ENCODE measurements at regions of chr12 and their contacts with region 1.

Region 1: GRCh38 chr12:100154474-100155247 is 12.0 kb upstream of the BLTP3B start:
- DNase-seq: peak; percentile 48 to 78 (median 58)
- H3K4me3 ChIP-seq: no peak overlapping the region
- H3K4me3 Mint-ChIP-seq: no peak overlapping the region
- H3K27ac ChIP-seq: no peak overlapping the region
- H3K27ac Mint-ChIP-seq: peak overlapping the region in 1 of 8 donors; percentile 72
- H3K4me1 ChIP-seq: peaks cover 4% of the 10 kb centered on the region
- H3K4me1 Mint-ChIP-seq: peaks cover 4 to 6% (median 6%) of the 10 kb centered on the region in 3 donors
- H3K27me3 ChIP-seq: no peaks in the 10 kb centered on the region
- H3K27me3 Mint-ChIP-seq: no peaks in the 10 kb centered on the region

Region 2: GRCh38 chr12:100128512-100128908 is 26.2 kb before region 1 on chr12:
- CTCF ChIA-PET with region 1: no interaction called
- POLR2A ChIA-PET with region 1: no interaction called
- DNase-seq: no peak
- H3K4me3 ChIP-seq: no peak overlapping the region
- H3K4me3 Mint-ChIP-seq: peak overlapping the region in 1 of 7 donors; percentile 19
- H3K27ac ChIP-seq: no peak overlapping the region
- H3K27ac Mint-ChIP-seq: peak overlapping the region in 6 of 8 donors; percentile 20 to 70 (median 42)
- H3K4me1 ChIP-seq: peaks cover 17% of the 10 kb centered on the region
- H3K4me1 Mint-ChIP-seq: peaks cover 32 to 51% (median 44%) of the 10 kb centered on the region in 3 donors
- H3K27me3 ChIP-seq: no peaks in the 10 kb centered on the region
- H3K27me3 Mint-ChIP-seq: no peaks in the 10 kb centered on the region

Region 3: GRCh38 chr12:100142851-100143559 is 11.7 kb before region 1 on chr12 and contains the start of gene BLTP3B:
- CTCF ChIA-PET with region 1: interaction called, 22 read pairs
- POLR2A ChIA-PET with region 1: interaction called, 4 read pairs
- DNase-seq: peak; percentile 81 to 93 (median 85)
- H3K4me3 ChIP-seq: peak within 1 kb of the TSS; percentile 89
- H3K4me3 Mint-ChIP-seq: peak within 1 kb of the TSS; percentile 87 to 97 (median 95)
- H3K27ac ChIP-seq: peak within 1 kb of the TSS; percentile 89
- H3K27ac Mint-ChIP-seq: peak within 1 kb of the TSS; percentile 93 to 99 (median 96)
- H3K4me1 ChIP-seq: peaks cover 13% of the 10 kb centered on the region
- H3K4me1 Mint-ChIP-seq: peaks cover 37 to 44% (median 38%) of the 10 kb centered on the region in 3 donors
- H3K27me3 ChIP-seq: no peaks in the 10 kb centered on the region
- H3K27me3 Mint-ChIP-seq: peaks cover 0 to 1% of the 10 kb centered on the region in 2 donors
- total RNA-seq, gene BLTP3B: 60.9 to 65.1 TPM

Region 4: GRCh38 chr12:100200463-100201181 is 46.0 kb after region 1 on chr12 and contains the start of gene ACTR6:
- CTCF ChIA-PET with region 1: interaction called, 11 read pairs
- POLR2A ChIA-PET with region 1: no interaction called
- DNase-seq: peak; percentile 96 to 99 (median 97)
- H3K4me3 ChIP-seq: peak within 1 kb of the TSS; percentile 91
- H3K4me3 Mint-ChIP-seq: peak within 1 kb of the TSS; percentile 93 to 100 (median 99)
- H3K27ac ChIP-seq: peak within 1 kb of the TSS; percentile 96
- H3K27ac Mint-ChIP-seq: peak within 1 kb of the TSS; percentile 89 to 100 (median 100)
- H3K4me1 ChIP-seq: peaks cover 31% of the 10 kb centered on the region
- H3K4me1 Mint-ChIP-seq: peaks cover 38 to 64% (median 53%) of the 10 kb centered on the region in 3 donors
- H3K27me3 ChIP-seq: no peaks in the 10 kb centered on the region
- H3K27me3 Mint-ChIP-seq: no peaks in the 10 kb centered on the region
- total RNA-seq, gene ACTR6: 35.1 to 36.6 TPM

Region 5: DNA sequence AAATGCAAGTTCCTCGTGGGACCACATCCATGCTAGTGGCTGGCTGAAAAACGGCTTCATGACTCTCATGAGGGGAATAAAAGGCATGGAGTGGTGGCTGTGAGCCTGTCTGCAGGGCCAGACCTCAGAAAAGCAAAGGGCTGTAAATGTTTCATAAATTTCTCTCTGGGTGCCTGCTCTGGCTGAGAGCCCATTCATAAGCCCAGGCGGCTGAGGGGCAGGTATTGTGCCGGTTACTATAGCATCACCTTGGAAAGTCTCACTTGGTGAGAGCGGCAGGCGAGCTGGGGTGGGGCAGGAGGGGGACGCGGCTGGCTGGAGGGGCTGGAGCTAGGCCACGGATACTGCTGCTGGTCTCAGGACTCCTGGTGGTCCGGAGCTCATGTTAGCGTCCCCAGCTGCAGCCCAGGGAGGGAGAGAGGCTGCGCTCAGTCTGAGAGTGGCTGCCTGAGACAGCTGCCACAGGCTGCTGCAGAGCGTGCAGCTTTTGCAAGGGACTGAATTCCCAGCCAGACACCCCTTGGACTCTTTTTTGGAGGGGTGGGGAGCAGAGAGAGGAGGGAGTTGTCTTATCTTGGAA is 202.1 kb after region 1 on chr12 and contains the start of gene SLC17A8:
- CTCF ChIA-PET with region 1: no interaction called
- POLR2A ChIA-PET with region 1: no interaction called
- DNase-seq: no peak
- H3K4me3 ChIP-seq: no peak within 1 kb of the TSS
- H3K4me3 Mint-ChIP-seq: no peak within 1 kb of the TSS
- H3K27ac ChIP-seq: no peak within 1 kb of the TSS
- H3K27ac Mint-ChIP-seq: peak within 1 kb of the TSS in 1 of 8 donors; percentile 66
- H3K4me1 ChIP-seq: no peaks in the 10 kb centered on the region
- H3K4me1 Mint-ChIP-seq: no peaks in the 10 kb centered on the region
- H3K27me3 ChIP-seq: peaks cover 6% of the 10 kb centered on the region
- H3K27me3 Mint-ChIP-seq: peaks cover 21 to 58% of the 10 kb centered on the region in 2 donors
- total RNA-seq, gene SLC17A8: not detected

Measured in CD8-positive, alpha-beta memory T cell (primary cell).